Activated CD8-positive, alpha-beta T cell treated with anti-CD3 and anti-CD28 coated beads for 36 hours (primary cell): ENCODE measurements at regions of chr15 and their contacts with region 1.

Region 1: GRCh38 chr15:81106560-81106959 is 27.5 kb upstream of the CFAP161 start:
- DNase-seq: peak; percentile 62
- ATAC-seq: peak; percentile 64
- H3K4me3 Mint-ChIP-seq: no peak overlapping the region
- H3K27ac Mint-ChIP-seq: no peak overlapping the region
- H3K4me1 Mint-ChIP-seq: peaks cover 4% of the 10 kb centered on the region
- H3K27me3 Mint-ChIP-seq: peaks cover 14% of the 10 kb centered on the region
- CTCF ChIP-seq: peak; percentile 73

Region 2: GRCh38 chr15:80977627-80978036 is 128.9 kb before region 1 on chr15:
- CTCF ChIA-PET with region 1: interaction called, 14 read pairs
- POLR2A ChIA-PET with region 1: no interaction called
- intact Hi-C with region 1: no loop called
- DNase-seq: peak; percentile 69
- ATAC-seq: peak; percentile 80
- H3K4me3 Mint-ChIP-seq: no peak overlapping the region
- H3K27ac Mint-ChIP-seq: peak overlapping the region; percentile 31
- H3K4me1 Mint-ChIP-seq: peaks cover 48% of the 10 kb centered on the region
- H3K27me3 Mint-ChIP-seq: no peaks in the 10 kb centered on the region
- CTCF ChIP-seq: peak; percentile 51

Region 3: GRCh38 chr15:80989518-80990478 is 116.8 kb before region 1 on chr15 and contains the start of gene MESD:
- CTCF ChIA-PET with region 1: interaction called, 5 read pairs
- POLR2A ChIA-PET with region 1: no interaction called
- intact Hi-C with region 1: loop called (anchors 10 kb)
- DNase-seq: peak; percentile 99
- ATAC-seq: peak; percentile 99
- H3K4me3 Mint-ChIP-seq: peak within 1 kb of the TSS; percentile 95
- H3K27ac Mint-ChIP-seq: peak within 1 kb of the TSS; percentile 93
- H3K4me1 Mint-ChIP-seq: peaks cover 44% of the 10 kb centered on the region
- H3K27me3 Mint-ChIP-seq: no peaks in the 10 kb centered on the region
- CTCF ChIP-seq: no peak
- total RNA-seq, gene MESD: 15.8 to 16.5 TPM

Region 4: GRCh38 chr15:81000624-81001151 is 105.9 kb before region 1 on chr15 and contains the start of gene TLNRD1:
- CTCF ChIA-PET with region 1: interaction called, 10 read pairs
- POLR2A ChIA-PET with region 1: interaction called, 3 read pairs
- intact Hi-C with region 1: loop called (anchors 10 kb)
- DNase-seq: peak; percentile 91
- ATAC-seq: peak; percentile 69
- H3K4me3 Mint-ChIP-seq: peak within 1 kb of the TSS; percentile 94
- H3K27ac Mint-ChIP-seq: peak within 1 kb of the TSS; percentile 98
- H3K4me1 Mint-ChIP-seq: peaks cover 49% of the 10 kb centered on the region
- H3K27me3 Mint-ChIP-seq: no peaks in the 10 kb centered on the region
- CTCF ChIP-seq: no peak
- total RNA-seq, gene TLNRD1: 19.3 to 20.1 TPM

Region 5: DNA sequence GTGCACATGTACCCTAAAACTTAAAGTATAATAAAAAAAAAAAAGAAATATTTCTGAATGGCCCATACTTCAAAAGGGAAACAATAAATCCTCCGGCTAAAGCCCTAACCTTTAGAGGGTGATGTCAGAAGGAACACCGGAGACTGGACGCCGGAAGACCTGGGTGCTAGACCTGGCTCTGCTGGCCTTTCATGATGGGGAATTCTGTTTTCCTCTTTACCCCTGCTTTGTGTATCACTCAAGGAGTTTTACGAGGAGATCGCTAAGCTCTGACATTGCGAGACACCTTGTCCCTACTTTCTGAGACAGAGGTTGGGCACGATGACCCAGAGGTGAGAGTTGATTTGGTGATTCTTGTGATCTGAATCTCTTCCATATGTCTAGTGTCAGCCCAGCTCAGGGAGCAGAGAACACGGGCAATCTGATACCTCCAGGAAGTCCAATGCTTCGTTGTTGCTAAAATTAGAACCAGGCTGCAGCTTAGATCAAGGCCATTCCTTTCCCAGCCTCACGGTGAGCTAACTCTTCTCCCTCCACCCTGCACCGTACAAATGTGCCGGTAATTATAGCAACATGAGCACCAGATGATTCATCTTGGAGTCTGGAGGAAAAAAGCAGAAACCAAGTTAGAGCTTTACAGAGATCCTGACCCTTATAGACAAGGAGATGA is 14.5 kb before region 1 on chr15:
- CTCF ChIA-PET with region 1: interaction called, 10 read pairs
- POLR2A ChIA-PET with region 1: no interaction called
- intact Hi-C with region 1: no loop called
- DNase-seq: no peak
- ATAC-seq: no peak
- H3K4me3 Mint-ChIP-seq: no peak overlapping the region
- H3K27ac Mint-ChIP-seq: no peak overlapping the region
- H3K4me1 Mint-ChIP-seq: no peaks in the 10 kb centered on the region
- H3K27me3 Mint-ChIP-seq: peaks cover 32% of the 10 kb centered on the region
- CTCF ChIP-seq: no peak

Region 6: DNA sequence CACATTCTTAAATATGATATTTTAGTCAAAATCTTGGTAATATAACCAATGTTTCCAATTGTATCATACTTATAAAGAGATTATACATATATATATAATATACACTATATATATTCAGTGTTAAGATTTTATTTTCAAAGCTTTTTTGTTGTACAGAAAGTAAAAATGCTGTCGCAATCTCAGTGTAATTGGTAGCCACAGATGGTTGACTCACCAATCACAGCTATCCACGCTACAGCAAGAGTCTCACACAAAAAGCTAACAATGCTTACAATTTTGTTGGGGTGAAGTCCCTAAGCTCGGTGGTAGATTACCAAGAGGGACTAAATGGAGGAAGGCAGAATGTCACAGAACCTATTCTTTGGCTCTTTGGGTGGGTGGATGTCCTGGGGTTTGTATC is 10.6 kb after region 1 on chr15:
- CTCF ChIA-PET with region 1: interaction called, 11 read pairs
- POLR2A ChIA-PET with region 1: no interaction called
- intact Hi-C with region 1: no loop called
- DNase-seq: no peak
- ATAC-seq: no peak
- H3K4me3 Mint-ChIP-seq: no peak overlapping the region
- H3K27ac Mint-ChIP-seq: no peak overlapping the region
- H3K4me1 Mint-ChIP-seq: peaks cover 5% of the 10 kb centered on the region
- H3K27me3 Mint-ChIP-seq: peaks cover 32% of the 10 kb centered on the region
- CTCF ChIP-seq: no peak